Cardiac septum (tissue), 1 donor: ENCODE measurements at regions of chr19 and their contacts with region 1.

Region 1: DNA sequence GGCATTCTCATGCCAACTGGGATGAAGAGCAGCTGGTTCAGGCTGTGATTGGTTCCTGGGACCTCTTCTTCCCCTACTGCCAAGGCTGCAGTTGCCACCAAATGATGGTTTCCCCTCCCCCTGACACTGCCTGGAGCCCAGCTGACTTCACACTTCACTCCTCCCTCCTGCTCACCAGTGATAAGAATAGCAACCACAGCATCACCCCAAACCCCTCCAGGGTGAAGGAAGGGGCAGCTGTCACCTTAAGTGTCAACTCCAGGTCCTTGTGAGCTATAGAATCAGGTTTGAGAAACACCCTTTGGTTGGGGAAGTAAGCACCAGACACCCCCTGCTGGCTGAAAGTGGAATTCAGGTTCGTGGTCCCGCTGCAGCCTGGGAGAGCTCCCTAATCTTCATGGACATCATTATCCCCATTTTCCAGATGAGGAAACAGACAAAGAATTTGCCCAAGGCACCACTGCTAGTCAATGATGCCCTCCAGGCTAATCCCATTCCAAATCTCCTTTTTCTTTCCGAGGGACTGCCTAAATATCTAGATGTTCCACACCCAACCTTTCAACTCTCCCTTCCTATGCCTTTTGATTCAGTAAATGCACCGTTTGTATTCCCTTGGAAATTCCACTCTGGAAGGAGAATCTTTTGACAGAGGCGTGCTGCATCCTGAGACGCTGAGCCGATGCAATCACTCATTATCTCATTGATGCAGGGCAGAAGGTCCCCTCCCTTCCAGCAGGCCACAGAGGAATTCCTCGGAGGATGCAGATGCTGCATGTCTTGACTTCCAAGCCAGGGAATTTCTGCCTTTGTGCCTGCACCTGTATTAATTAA is 50.6 kb upstream of the UQCRFS1 start:
- DNase-seq: peak; percentile 74

Region 2: DNA sequence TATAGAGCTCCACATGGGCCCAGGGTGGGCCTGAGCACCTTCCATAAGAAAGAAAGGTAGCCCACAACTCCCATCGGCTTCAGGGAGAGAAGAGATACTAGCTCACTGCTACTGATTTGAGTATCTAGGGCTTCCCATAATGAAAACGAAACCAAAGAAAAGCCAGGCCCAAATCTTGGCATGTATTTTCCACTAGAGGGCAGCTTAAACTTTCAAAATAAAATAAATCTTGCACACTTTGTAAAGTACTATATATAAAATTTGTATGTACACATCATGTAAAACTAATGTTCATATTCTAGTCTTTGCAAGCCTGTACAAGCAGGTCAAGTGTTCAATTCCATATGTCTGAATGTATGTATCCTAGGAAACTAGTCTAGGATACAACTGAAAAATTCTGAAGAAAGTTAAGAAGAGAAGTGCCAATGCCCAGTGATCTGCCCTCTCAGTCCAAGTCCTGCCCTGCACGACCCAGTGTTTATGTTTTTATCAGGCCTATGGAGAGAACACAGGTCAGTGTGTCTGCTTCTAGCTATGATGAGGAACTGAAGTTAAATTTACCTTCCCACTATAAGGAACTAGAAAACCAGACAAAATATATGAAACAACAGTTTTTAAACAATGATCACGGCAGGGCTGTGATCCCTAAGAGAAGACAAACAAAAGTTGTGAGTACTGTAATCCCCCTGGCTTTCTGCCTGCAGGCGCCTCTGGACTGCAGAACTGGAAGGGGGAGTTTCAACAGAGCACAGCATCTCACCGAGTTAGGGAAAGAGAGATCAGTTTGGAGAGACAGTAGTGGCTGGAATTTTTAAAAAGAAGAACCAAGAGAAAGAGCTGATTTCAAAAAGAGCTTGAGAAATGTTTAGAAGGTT is 526.3 kb before region 1 on chr19:
- intact Hi-C with region 1: loop called (anchors 10 kb)
- DNase-seq: no peak

Region 3: DNA sequence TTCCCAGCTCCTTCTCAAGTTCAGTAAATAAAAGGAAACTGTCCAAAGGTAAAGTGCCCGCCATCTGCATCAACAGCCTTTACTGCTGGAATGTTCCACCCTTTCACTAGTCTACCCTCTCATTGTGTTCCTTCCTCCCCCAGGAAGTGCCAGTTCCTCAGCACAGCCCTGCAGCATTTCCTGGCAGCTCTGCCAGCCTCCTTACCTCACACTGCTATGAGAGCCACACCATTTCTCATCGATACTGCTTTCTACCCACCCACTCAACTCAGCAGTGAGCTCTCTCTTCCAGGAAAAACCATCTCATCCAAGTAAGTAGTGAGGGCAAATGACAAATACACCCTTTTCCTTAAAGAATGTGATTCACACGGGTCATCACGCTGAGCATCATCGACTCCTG is 70.4 kb before region 1 on chr19:
- intact Hi-C with region 1: no loop called
- DNase-seq: no peak